Caco-2 (cell line): ENCODE measurements at regions of chr3 and their contacts with region 1.

Region 1: GRCh38 chr3:180322829-180323228 is 279.1 kb upstream of the TTC14 start:
- DNase-seq: no peak
- H3K4me3 ChIP-seq: no peak overlapping the region
- H3K4me3 Mint-ChIP-seq: no peak overlapping the region
- H3K27ac Mint-ChIP-seq: no peak overlapping the region
- H3K4me1 ChIP-seq: no peaks in the 10 kb centered on the region
- H3K4me1 Mint-ChIP-seq: no peaks in the 10 kb centered on the region
- H3K27me3 ChIP-seq: no peaks in the 10 kb centered on the region
- H3K27me3 Mint-ChIP-seq: peaks cover 14% of the 10 kb centered on the region
- CTCF ChIP-seq: no peak

Region 2: DNA sequence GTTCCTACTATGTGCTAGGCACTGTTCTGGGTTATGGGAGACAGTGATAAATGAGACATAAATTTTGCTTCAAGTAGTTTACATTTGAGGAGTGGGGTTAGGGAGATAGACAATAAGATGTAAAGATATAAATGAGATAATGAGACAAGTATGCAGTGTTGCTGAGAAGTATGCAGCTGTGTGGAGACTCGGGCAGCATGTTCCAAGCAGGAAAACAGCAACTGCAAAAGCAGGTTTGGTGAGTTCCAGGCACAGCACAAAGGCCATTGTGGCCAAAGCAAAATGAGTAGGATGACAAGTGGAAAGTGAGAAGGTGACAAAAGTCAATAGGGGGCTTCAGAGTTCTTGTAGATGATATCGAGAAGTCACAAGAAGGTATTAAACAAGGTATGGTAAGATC is 27.0 kb before region 1 on chr3:
- CTCF ChIA-PET with region 1: no interaction called
- POLR2A ChIA-PET with region 1: no interaction called
- intact Hi-C with region 1: loop called (anchors 1 kb)
- DNase-seq: peak in 1 of 2 experiments; percentile 9
- H3K4me3 ChIP-seq: no peak overlapping the region
- H3K4me3 Mint-ChIP-seq: no peak overlapping the region
- H3K27ac Mint-ChIP-seq: no peak overlapping the region
- H3K4me1 ChIP-seq: no peaks in the 10 kb centered on the region
- H3K4me1 Mint-ChIP-seq: peaks cover 8% of the 10 kb centered on the region
- H3K27me3 ChIP-seq: no peaks in the 10 kb centered on the region
- H3K27me3 Mint-ChIP-seq: no peaks in the 10 kb centered on the region
- CTCF ChIP-seq: no peak